ENCODE measurements at regions of chr1 and their contacts with region 1.

Region 1: DNA sequence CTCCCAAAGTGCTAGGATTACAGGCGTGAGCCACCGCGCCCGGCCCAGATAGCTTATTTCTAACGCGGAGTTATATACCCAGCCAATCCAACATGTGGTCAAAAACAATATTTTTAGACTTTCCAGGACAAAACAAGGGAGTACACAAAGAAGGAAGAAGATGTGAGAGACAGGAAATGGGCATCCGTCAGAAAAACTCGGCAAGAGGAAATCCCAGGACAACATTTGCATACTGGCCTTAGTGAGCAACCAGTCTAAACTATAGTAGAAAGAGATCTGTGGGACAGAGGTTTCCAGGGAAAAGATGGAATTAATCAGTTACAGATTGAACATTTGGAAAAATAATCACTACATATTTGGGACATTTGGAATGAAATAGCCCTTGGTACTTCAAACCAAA is 11.4 kb downstream of the ARMH1 start:
- DNase-seq: no peak
- H3K4me3 ChIP-seq: no peak overlapping the region
- CTCF ChIP-seq: no peak
- POLR2A ChIP-seq: no peak

Region 2: DNA sequence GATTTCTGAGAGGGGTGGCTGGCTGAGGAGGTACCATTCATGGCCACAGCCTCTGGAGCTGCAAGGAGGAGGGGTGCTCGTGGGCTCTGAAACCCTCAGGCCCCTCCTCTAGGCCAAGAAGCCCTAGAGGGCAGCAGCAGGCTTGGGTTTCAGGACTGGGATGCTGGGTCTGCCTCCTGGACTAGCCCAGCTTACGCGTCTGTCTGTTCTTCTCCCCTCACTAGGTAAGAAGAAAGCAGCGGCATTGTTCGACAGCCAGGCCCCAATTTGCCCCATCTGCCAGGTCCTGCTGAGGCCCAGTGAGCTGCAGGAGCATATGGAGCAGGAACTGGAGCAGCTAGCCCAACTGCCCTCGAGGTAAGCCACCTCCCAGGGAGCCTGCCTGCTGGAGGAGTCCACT is 71.9 kb before region 1 on chr1:
- intact Hi-C with region 1: loop called (anchors 2 kb)
- DNase-seq: no peak
- H3K4me3 ChIP-seq: no peak overlapping the region
- CTCF ChIP-seq: no peak
- POLR2A ChIP-seq: no peak